ENCODE measurements at regions of chr1 and their contacts with region 1.

Region 1: DNA sequence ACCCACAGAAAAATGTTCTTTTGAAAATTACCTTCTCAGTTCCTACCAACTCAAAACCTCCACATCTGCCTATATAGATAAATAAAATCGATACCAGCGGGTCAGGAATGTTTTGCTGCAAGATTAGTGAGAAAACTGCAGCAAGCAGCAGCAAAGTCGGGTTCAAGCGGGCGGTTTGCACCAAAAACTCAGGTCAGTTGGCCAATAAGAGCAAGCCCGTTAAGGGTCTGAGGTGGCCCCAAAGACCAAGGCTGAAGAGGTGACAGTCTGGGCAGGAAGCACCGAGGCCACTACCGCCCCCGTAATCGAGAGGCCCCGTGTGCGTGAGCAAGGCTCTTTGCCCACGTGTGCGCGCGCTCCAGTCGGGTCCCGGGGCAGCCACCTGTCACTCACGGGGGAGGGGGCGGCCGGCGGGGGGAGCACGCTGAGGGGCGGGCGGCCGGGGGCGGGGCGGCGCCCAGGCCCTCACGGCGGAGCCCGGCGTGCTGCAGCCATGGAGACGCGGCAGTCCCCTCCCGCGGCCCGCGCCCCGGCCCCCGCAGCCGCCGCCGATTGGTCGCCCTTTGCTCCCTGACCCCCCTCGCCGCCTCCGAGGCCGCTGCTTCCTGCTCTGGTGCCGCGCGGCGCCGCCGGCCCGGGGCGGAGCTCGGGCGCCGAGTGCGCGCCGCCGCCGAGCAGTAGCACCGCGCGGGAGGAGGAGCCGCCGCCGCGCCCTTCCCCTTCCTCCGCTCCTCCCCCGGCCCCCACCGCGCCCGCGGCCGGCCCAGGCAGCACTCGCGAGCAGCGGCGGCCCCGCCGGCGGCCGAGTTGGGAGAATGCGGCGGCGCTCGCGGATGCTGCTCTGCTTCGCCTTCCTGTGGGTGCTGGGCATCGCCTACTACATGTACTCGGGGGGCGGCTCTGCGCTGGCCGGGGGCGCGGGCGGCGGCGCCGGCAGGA is at the start of gene GALNT2:
- DNase-seq: peak; percentile 89 to 95 (median 95)
- ATAC-seq: peak; percentile 95
- H3K4me3 ChIP-seq: peak within 1 kb of the TSS; percentile 79
- H3K4me1 ChIP-seq: peaks cover 14% of the 10 kb centered on the region
- CTCF ChIP-seq: no peak
- total RNA-seq, gene GALNT2: 29.5 to 59.1 (median 55.2) TPM

Region 2: DNA sequence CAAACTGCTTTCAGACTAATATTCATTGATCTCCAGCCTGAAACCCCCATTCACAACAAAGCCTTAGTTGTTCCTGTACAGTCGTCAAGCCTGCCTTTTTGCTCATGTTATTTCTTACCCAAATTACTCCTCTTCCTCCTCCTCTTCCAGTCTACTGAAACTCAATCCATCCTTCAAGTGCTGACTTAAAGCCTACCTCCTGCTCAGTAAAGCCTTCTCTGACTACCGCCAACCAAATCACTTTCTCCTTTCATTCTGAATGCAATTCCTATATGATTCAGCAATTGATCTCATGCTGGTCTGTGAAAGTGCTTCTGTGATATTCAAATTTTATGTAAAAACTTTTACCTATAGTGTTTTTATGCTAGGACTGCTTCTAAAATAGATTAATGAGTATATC is 459.4 kb before region 1 on chr1:
- intact Hi-C with region 1: loop called in 1 of 2 experiments (anchors 5 kb)
- DNase-seq: no peak
- ATAC-seq: no peak
- H3K4me3 ChIP-seq: no peak overlapping the region
- H3K4me1 ChIP-seq: no peaks in the 10 kb centered on the region
- CTCF ChIP-seq: no peak